ENCODE measurements at regions of chr10 and their contacts with region 1.

Region 1: DNA sequence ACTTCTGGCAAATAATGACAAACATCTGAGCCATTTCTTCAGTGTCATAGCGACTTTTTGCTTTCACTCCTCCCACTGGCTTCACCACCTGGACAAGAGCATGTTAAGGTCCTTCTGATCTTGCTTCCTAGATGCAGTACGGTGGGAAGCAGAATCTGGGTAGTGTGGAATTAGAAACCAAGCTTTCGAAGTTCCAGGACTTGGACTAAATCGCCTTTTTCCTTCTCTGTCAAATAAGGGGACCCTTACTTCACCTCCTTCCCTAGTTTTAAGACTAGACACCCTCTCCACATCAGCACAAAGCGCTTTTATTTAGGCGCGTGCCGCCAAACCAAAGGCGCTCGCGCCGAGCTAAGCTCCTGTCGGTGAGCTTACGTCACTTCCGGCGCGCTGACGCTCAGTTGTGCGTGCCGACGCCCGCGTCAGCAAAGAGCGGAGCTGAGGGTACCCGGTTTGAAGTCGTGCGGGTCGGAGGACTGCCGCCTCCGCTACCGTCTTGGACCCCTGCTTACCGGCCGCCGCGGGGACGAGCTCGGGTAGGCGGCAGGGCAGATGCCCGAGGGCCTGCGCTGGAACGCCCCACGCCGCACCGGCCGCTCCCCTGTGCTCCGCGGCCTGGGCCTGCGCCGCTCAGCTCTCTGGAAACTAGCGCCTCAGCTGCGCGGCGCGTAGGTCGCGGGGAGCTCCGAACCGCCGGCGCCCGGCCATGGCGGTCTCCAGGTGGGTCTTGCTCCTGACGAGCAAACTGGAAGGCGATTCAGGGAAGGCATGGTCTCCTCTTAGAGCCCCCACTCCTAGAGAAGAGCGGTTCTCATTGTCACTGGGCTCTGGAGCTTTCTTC is at the start of gene BTAF1:
- DNase-seq: peak; percentile 90
- H3K4me3 Mint-ChIP-seq: peak within 1 kb of the TSS; percentile 84
- H3K27ac Mint-ChIP-seq: peak within 1 kb of the TSS; percentile 98
- H3K4me1 Mint-ChIP-seq: peaks cover 17% of the 10 kb centered on the region
- H3K27me3 Mint-ChIP-seq: no peaks in the 10 kb centered on the region
- CTCF ChIP-seq: no peak
- total RNA-seq, gene BTAF1: 35.5 and 37.0 TPM in 2 replicates

Region 2: GRCh38 chr10:91901784-91902677 is 21.6 kb before region 1 on chr10:
- CTCF ChIA-PET with region 1: interaction called, 4 read pairs
- POLR2A ChIA-PET with region 1: interaction called, 41 read pairs
- intact Hi-C with region 1: no loop called
- DNase-seq: peak; percentile 93
- H3K4me3 Mint-ChIP-seq: no peak overlapping the region
- H3K27ac Mint-ChIP-seq: peak overlapping the region; percentile 85
- H3K4me1 Mint-ChIP-seq: peaks cover 19% of the 10 kb centered on the region
- H3K27me3 Mint-ChIP-seq: no peaks in the 10 kb centered on the region
- CTCF ChIP-seq: no peak

Region 3: GRCh38 chr10:91941426-91941825 is 17.8 kb after region 1 on chr10:
- CTCF ChIA-PET with region 1: no interaction called
- POLR2A ChIA-PET with region 1: interaction called, 23 read pairs
- intact Hi-C with region 1: no loop called
- DNase-seq: no peak
- H3K4me3 Mint-ChIP-seq: no peak overlapping the region
- H3K27ac Mint-ChIP-seq: no peak overlapping the region
- H3K4me1 Mint-ChIP-seq: peaks cover under 1% of the 10 kb centered on the region
- H3K27me3 Mint-ChIP-seq: no peaks in the 10 kb centered on the region
- CTCF ChIP-seq: no peak

Measured in MCF 10A (cell line).